ENCODE measurements at regions of chr1 and their contacts with region 1.

Region 1: DNA sequence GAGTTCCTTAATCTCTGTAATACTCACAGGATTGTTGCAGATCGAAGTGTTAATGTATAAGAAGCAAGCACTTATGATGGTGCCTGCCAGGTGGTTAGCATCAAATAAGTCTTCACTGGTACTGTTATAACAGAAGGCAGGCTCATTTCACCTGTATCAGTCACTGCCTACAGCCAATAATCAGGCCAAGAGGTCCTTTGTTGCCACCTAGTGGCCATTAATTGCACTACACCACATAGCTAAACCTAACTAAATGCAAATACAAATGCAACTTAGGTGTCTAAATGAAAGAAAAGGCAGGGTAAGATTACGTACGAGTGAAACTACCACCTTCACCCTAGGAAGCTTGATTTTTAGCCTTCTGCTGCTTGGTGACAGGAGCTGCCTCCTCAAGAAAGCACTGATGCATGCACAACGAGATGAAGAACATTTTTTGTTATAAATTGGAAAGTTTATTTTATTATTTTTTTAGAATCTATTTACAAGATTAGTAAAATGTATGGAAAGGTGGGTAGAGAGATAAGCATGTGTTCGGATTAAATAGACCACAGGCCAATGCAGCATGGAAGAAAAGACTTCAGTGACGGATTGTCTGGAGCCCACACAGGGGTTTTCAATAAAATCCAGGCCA is 334.8 kb upstream of the CAMK1G start:
- DNase-seq: peak; percentile 62
- CTCF ChIP-seq: peak; percentile 87

Region 2: GRCh38 chr1:208652296-208653160 is 596.2 kb before region 1 on chr1:
- CTCF ChIA-PET with region 1: interaction called, 29 read pairs
- POLR2A ChIA-PET with region 1: no interaction called
- DNase-seq: peak; percentile 57
- CTCF ChIP-seq: peak; percentile 83

Region 3: GRCh38 chr1:208850442-208850841 is 398.3 kb before region 1 on chr1:
- CTCF ChIA-PET with region 1: no interaction called
- POLR2A ChIA-PET with region 1: no interaction called
- DNase-seq: no peak
- CTCF ChIP-seq: no peak

Region 4: DNA sequence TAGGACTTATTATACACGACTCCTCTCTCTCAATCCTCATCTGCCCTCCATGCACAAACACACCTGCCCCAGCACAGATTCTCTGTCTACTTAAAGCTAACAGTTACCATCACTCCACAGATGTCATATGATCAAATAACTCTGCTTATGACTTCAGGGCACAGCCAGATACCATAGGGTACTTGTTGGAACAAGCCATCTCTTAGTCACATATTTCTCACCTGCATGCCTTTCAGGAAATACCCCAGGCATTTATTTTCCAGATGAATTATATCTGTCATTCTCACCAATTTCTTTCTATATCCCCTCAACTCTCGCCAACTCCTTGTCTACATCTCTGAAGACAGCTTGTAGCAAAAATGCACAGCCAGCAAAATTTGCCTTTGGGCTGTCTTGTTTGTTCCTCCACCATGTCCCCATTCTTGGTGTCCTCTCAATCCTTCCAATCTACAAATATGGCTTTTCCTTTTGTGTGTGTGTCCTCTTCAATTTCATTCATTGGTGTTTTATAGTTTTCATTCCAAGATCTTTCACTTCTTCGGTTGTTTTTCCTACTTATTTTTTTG is 19.2 kb before region 1 on chr1:
- CTCF ChIA-PET with region 1: interaction called, 12 read pairs
- POLR2A ChIA-PET with region 1: no interaction called
- DNase-seq: no peak
- CTCF ChIP-seq: no peak

Region 5: DNA sequence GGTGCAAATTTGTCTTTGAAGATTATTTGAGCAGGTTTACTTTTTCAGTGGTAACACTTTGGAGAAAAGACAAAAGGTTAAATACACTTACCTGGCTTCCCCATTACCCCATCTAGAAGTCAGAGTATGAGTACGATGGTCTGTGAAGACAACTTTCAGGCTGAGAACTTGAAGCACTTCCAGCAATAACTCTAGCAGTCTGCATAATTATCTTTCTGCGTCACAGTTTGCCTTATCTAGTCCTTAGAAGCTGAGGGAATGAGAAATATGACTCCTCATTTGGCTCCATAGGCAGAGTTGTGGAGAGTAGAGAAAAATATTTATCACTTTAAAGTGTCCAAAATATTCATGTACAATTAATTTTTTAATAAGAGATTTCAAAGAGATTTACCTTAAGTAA is 11.4 kb after region 1 on chr1:
- CTCF ChIA-PET with region 1: interaction called, 16 read pairs
- POLR2A ChIA-PET with region 1: no interaction called
- DNase-seq: no peak
- CTCF ChIP-seq: no peak

Region 6: DNA sequence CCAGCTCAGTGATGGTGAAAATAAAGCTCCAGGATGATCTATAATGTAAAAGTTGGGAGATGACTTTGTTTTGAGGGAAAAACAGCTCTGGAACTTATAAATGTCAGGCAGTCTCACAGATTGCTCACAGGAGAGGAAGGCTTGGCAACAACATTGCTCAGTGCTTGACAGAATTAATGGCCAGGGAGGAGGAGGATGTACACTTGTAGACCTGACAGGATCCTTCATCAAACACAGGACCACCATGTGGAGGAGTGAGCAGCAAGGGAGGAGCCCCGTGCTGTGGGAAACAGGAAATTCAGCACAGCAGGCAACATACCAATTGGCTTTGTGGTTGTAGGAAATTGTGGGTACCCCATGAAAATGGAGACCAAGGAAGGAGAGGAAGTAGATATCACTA is 43.0 kb after region 1 on chr1:
- CTCF ChIA-PET with region 1: interaction called, 10 read pairs
- POLR2A ChIA-PET with region 1: no interaction called
- DNase-seq: no peak
- CTCF ChIP-seq: no peak